ENCODE measurements at regions of chr3 and their contacts with region 1.

Region 1: DNA sequence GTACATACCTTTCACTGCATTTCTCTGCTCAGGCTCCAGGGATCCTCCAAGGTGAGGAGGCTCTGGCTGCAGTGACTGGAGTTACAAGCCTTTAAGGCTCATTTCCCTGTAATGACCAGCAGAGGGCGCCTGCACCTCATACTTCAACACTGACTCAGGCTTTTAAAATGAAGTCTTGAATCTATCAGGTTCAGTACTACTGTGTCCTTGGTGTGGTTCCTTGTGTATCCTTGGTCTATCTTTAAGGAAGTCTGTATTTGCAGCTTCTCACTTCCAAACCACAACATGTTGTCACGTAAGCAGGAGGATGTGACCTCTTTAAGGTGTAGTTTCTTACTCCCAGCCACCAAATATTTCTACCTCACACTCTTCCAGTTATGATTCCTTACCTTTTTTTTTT is 122.5 kb upstream of the ZBED2 start:
- DNase-seq: peak; percentile 79
- ATAC-seq: peak; percentile 91
- H3K4me3 Mint-ChIP-seq: no peak overlapping the region
- H3K27ac Mint-ChIP-seq: peak overlapping the region; percentile 27
- H3K4me1 Mint-ChIP-seq: peaks cover 6% of the 10 kb centered on the region
- H3K27me3 Mint-ChIP-seq: no peaks in the 10 kb centered on the region

Region 2: DNA sequence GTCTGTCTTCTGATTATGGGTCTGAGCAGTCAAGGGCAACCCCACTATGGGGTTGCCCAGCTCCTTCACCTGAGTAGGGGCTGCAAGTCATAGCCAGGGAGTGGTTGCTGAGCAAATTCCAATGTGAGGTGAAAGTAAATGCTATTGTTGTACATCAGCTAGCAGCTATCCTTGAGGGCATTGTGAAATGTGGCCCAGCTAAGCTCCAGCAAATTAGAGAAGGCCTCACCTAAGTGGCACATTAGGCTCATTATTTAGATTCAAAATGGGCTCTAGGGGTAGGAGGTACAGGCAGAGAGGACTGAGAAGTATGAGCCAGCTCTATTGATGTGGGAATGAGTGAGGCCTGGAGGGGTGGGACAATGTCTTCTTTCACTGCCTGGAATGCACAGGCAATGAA is 277.4 kb before region 1 on chr3:
- CTCF ChIA-PET with region 1: no interaction called
- POLR2A ChIA-PET with region 1: no interaction called
- DNase-seq: no peak
- ATAC-seq: no peak
- H3K4me3 Mint-ChIP-seq: no peak overlapping the region
- H3K27ac Mint-ChIP-seq: no peak overlapping the region
- H3K4me1 Mint-ChIP-seq: no peaks in the 10 kb centered on the region
- H3K27me3 Mint-ChIP-seq: no peaks in the 10 kb centered on the region

Region 3: DNA sequence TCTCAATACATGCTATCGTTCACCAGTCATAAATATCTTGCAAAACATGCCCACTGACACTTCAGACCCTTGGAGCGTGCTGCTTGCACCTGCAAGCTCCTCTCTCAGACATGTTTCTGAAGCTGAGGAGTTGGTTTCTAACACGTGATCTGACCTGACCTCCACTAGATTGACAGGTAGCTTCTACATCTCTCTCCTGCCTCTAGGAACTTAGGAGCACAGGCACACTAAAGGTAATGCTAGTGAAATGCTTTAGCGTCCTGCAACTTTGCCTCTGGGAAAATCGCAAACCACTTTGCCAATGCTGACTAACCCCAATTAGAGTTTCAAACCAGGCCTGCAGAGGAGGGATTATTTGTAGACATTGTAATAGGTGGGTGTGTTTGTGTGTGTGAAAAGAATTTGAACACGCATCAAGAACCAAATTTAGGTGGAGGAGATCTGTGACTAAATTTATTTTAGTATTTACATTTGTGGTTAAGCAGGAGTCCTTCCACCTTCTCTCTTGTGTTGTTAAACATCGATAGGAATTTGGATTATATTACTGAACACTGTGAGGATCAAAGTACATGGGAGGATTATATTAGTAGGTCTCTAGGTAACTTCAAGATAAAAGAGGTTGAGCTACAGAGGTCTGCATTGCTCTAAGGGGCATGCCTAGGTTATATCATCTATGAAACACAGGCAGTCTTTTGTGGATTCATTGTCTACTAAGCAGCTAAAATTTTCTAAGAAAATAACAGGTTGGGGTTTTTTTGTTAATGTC is 35.8 kb before region 1 on chr3:
- CTCF ChIA-PET with region 1: interaction called, 18 read pairs
- POLR2A ChIA-PET with region 1: no interaction called
- DNase-seq: no peak
- ATAC-seq: no peak
- H3K4me3 Mint-ChIP-seq: no peak overlapping the region
- H3K27ac Mint-ChIP-seq: no peak overlapping the region
- H3K4me1 Mint-ChIP-seq: peaks cover 53% of the 10 kb centered on the region
- H3K27me3 Mint-ChIP-seq: no peaks in the 10 kb centered on the region

Region 4: GRCh38 chr3:111691293-111691909 is 26.2 kb before region 1 on chr3:
- CTCF ChIA-PET with region 1: interaction called, 85 read pairs
- POLR2A ChIA-PET with region 1: no interaction called
- DNase-seq: no peak
- ATAC-seq: no peak
- H3K4me3 Mint-ChIP-seq: no peak overlapping the region
- H3K27ac Mint-ChIP-seq: peak overlapping the region; percentile 53
- H3K4me1 Mint-ChIP-seq: peaks cover 68% of the 10 kb centered on the region
- H3K27me3 Mint-ChIP-seq: no peaks in the 10 kb centered on the region

Region 5: GRCh38 chr3:111859974-111860859 is 142.6 kb after region 1 on chr3:
- CTCF ChIA-PET with region 1: interaction called, 66 read pairs
- POLR2A ChIA-PET with region 1: no interaction called
- DNase-seq: peak; percentile 78
- ATAC-seq: peak; percentile 73
- H3K4me3 Mint-ChIP-seq: peak overlapping the region; percentile 86
- H3K27ac Mint-ChIP-seq: peak overlapping the region; percentile 77
- H3K4me1 Mint-ChIP-seq: peaks cover 11% of the 10 kb centered on the region
- H3K27me3 Mint-ChIP-seq: peaks cover 45% of the 10 kb centered on the region

Region 6: GRCh38 chr3:111978493-111979433 is 261.2 kb after region 1 on chr3 and contains the start of gene ABHD10:
- CTCF ChIA-PET with region 1: interaction called, 234 read pairs
- POLR2A ChIA-PET with region 1: interaction called, 5 read pairs
- DNase-seq: peak; percentile 98
- ATAC-seq: peak; percentile 98
- H3K4me3 Mint-ChIP-seq: peak within 1 kb of the TSS; percentile 91
- H3K27ac Mint-ChIP-seq: peak within 1 kb of the TSS; percentile 95
- H3K4me1 Mint-ChIP-seq: peaks cover 28% of the 10 kb centered on the region
- H3K27me3 Mint-ChIP-seq: peaks cover 6% of the 10 kb centered on the region
- total RNA-seq, gene ABHD10: 36.3 to 43.7 TPM

Region 7: DNA sequence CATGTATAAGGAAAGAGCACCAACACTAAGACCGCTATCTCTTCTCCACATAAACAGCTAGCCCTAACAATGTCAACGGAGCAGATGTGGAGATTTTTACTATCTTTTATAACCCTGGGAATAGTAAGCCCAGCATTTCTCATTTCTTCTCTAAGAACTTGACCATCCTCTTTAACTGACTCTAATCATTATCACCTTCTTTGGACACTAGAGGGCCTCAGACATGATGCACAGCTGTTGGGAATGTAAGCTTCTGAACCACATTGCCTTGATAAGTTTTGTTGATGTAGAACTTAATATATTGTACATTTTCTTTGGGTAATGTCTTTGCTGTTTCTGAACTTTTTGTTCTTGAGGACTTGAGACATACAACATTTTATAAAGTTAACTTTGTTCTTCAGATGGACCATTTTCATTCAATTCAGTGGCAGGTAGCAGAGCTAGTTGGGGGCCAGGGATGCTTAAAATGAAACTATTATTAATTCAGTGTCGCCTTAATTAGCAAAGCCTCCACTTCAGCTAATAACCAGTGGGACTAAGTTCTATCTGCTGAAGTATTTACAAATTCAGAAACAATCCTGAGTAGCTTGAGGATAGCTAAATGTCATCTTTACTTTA is 271.6 kb after region 1 on chr3:
- CTCF ChIA-PET with region 1: interaction called, 28 read pairs
- POLR2A ChIA-PET with region 1: no interaction called
- DNase-seq: no peak
- ATAC-seq: peak; percentile 88
- H3K4me3 Mint-ChIP-seq: no peak overlapping the region
- H3K27ac Mint-ChIP-seq: no peak overlapping the region
- H3K4me1 Mint-ChIP-seq: peaks cover 28% of the 10 kb centered on the region
- H3K27me3 Mint-ChIP-seq: no peaks in the 10 kb centered on the region